Activated CD4-positive, alpha-beta memory T cell treated with anti-CD3 and anti-CD28 coated beads for 36 hours (primary cell): ENCODE measurements at regions of chr1 and their contacts with region 1.

Region 1: DNA sequence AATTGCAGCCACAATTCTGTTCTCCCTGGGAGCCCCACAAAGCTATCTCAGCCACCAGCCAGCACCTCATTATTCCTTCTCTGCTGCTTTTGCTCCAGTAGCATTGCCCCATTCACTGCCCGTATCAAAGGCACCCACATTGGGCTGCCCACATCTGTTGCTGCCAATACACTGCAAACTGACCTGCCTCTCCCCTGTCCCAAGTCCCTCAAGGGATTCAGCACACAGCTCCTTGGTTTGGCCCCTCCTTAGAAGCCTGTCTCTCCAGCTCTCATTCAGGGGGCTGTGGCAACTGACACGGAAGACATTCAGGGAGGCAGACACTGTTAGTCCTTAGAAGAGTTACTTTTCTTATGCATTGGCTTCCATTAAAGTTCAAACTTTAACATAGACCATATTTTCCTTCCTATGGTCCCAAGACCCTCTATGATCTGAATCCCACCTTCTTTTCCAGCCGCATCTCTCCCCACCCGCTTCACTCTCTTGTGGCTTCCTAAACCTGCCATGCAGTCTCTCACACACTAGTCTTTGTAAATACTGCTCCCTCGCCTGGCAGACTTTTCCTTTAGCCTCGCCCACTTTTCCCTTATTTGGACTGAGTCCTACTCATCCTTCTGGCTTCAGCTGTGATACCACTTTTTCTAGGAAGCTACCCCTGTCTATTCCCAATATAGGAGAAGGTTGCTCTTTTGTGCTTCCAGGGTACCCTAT is 19.3 kb upstream of the KLHDC8A start:
- DNase-seq: no peak
- H3K4me3 Mint-ChIP-seq: no peak overlapping the region
- H3K27ac Mint-ChIP-seq: no peak overlapping the region
- H3K4me1 Mint-ChIP-seq: peaks cover 21% of the 10 kb centered on the region
- H3K27me3 Mint-ChIP-seq: peaks cover 3% of the 10 kb centered on the region

Region 2: GRCh38 chr1:205416322-205416721 is 40.3 kb after region 1 on chr1:
- CTCF ChIA-PET with region 1: no interaction called
- POLR2A ChIA-PET with region 1: no interaction called
- intact Hi-C with region 1: loop called (anchors 1 kb)
- DNase-seq: no peak
- H3K4me3 Mint-ChIP-seq: no peak overlapping the region
- H3K27ac Mint-ChIP-seq: no peak overlapping the region
- H3K4me1 Mint-ChIP-seq: no peaks in the 10 kb centered on the region
- H3K27me3 Mint-ChIP-seq: peaks cover 4% of the 10 kb centered on the region